Heart right ventricle (tissue), 16 donors: ENCODE measurements at regions of chr5 and their contacts with region 1.

Region 1: GRCh38 chr5:74640450-74640953 is at the start of gene ENC1:
- DNase-seq: peak; percentile 87 to 89
- ATAC-seq: peak; percentile 85 to 95 (median 89)
- H3K4me3 ChIP-seq: peak within 1 kb of the TSS; percentile 36 to 89 (median 81)
- H3K27ac ChIP-seq: peak within 1 kb of the TSS; percentile 61 to 97 (median 92)
- H3K4me1 ChIP-seq: peaks cover 5 to 67% (median 43%) of the 10 kb centered on the region in 9 donors
- H3K27me3 ChIP-seq: no peaks in the 10 kb centered on the region
- CTCF ChIP-seq: peak; percentile 44 to 70 (median 60)
- total RNA-seq, gene ENC1: 2.8 to 9.1 (median 4.0) TPM

Region 2: DNA sequence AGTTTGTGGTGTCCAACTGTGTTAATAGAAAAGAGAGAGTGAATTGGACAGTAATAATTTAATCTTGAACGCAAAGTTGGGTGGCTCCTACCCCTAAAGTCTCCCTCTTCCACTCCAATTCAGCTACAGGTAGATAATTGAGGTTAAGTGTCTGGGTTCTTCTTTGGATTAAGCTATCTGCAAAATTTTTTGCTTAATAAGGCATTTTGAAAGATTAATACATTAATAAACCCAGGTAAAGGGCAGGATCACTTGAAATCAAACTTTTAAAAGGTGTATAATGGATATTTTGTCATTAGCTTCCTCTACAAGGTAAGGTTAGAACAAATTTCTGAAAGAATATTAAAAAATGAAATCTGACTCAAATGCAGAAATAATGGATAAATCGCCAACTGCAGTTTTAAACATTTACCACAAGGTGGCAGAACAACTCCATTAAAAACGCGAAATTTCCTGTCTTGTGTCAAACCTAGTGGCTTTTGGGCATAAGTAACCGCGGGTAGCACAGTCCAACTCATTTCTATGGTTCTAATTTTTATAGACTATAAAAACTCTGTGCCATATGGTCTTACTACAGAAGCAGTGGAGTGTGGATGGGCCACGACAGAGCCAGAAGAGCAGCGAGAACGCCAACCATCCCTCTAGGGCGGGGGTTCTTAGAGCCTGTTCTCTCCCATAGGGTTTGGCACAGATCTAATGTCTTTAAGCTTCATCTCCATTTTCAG is 738.0 kb before region 1 on chr5:
- intact Hi-C with region 1: loop called in 5 of 10 experiments (anchors 1 to 5 kb)
- DNase-seq: peak in 1 of 2 donors; percentile 14
- ATAC-seq: peak in 5 of 8 donors; percentile 26 to 44 (median 34)
- H3K4me3 ChIP-seq: peak overlapping the region in 3 of 10 donors; percentile 4 to 25 (median 8)
- H3K27ac ChIP-seq: peak overlapping the region in 2 of 10 donors; percentile 56 to 59
- H3K4me1 ChIP-seq: peaks cover 0 to 54% (median 15%) of the 10 kb centered on the region in 9 donors
- H3K27me3 ChIP-seq: no peaks in the 10 kb centered on the region
- CTCF ChIP-seq: peak; percentile 69 to 93 (median 85)

Region 3: DNA sequence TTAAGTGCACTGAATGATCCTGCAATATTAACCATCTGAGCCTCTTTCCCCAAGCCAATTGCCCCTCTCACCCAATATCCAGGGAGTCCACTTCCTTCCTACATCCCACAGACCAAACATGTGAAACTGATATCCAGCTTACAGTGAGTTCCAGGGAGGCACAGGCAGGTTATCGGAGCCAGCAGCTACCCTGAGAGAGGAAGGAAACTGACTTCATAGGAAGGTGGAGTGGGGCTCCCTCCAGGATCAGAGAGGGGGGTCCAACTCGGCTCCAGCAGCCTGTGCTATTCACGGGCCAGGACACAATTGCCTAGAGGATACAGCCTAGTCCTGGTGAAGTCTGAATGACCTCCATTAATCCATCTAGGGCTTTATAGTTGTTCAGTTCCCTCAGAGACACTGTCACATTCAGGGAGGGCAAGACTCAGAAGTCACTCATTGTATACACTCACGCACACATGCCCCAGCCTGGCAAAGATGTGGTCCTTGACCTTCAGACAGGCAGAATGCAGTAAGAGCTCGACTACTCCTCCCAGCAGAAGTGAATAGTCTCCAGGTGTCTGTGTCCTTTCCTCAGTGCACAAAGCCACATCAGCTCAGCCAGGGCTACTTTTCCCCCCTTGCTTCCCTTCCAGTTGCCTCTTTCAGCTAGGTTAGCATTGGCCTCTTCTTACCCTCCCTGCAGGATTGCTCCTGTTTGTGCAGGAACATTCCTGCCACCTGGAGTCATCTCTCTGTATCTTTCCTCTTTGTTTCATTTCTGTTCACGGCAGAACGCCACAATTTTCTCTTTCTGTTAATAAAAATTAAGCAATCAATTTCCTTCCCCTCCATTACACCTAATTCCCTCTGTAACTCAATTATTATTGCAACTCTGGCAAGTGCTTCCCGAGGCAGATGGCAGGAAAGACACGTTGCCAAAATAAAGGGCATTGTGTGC is 512.9 kb before region 1 on chr5:
- intact Hi-C with region 1: loop called in 1 of 10 experiments (anchors 10 kb)
- DNase-seq: peak in 1 of 2 donors; percentile 33
- ATAC-seq: peak; percentile 68 to 90 (median 84)
- H3K4me3 ChIP-seq: no peak overlapping the region
- H3K27ac ChIP-seq: peak overlapping the region in 3 of 10 donors; percentile 13 to 45 (median 29)
- H3K4me1 ChIP-seq: peaks cover 0 to 27% (median 10%) of the 10 kb centered on the region in 9 donors
- H3K27me3 ChIP-seq: no peaks in the 10 kb centered on the region
- CTCF ChIP-seq: no peak

Region 4: GRCh38 chr5:74294231-74294705 is 346.2 kb before region 1 on chr5:
- intact Hi-C with region 1: loop called in 3 of 10 experiments (anchors 5 to 10 kb)
- DNase-seq: peak in 1 of 2 donors; percentile 21
- ATAC-seq: peak in 1 of 8 donors; percentile 8
- H3K4me3 ChIP-seq: no peak overlapping the region
- H3K27ac ChIP-seq: no peak overlapping the region
- H3K4me1 ChIP-seq: peaks cover 0 to 18% (median 7%) of the 10 kb centered on the region in 9 donors
- H3K27me3 ChIP-seq: no peaks in the 10 kb centered on the region
- CTCF ChIP-seq: no peak

Region 5: GRCh38 chr5:74446725-74447241 is 193.7 kb before region 1 on chr5:
- intact Hi-C with region 1: loop called in 1 of 10 experiments (anchors 10 kb)
- DNase-seq: peak; percentile 14 to 46
- ATAC-seq: peak; percentile 77 to 90 (median 83)
- H3K4me3 ChIP-seq: peak overlapping the region in 2 of 10 donors; percentile 7 to 8
- H3K27ac ChIP-seq: peak overlapping the region in 7 of 10 donors; percentile 15 to 67 (median 46)
- H3K4me1 ChIP-seq: peaks cover 0 to 22% (median 7%) of the 10 kb centered on the region in 9 donors
- H3K27me3 ChIP-seq: no peaks in the 10 kb centered on the region
- CTCF ChIP-seq: no peak

Region 6: DNA sequence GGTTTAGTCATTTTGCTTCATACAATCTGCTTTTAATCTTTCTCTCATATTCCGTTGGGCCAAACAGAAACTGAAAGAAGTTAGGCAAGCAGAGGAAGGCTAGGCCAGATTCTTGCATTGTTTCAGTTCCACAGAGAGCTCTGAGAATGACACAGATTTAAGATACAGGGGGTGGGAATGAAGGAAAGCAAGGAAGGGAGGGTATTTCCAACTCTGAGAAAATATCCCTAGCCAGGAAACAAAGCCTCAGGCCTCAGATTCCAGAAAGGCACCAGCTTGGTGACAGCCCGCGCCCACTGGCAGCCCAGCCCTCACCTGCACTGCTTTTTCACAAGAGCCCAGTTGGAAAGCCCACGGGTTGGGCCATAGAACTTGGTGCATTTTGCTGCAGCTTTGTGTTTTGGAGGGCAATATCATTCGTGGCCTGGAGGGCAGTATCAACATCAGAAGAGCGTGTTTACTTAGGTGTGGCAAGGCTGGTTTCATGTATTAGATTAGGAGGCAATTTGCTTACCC is 63.5 kb before region 1 on chr5:
- intact Hi-C with region 1: loop called in 2 of 10 experiments (anchors 10 kb)
- DNase-seq: peak in 1 of 2 donors; percentile 28
- ATAC-seq: peak in 7 of 8 donors; percentile 76 to 95 (median 89)
- H3K4me3 ChIP-seq: peak overlapping the region in 5 of 10 donors; percentile 8 to 21 (median 12)
- H3K27ac ChIP-seq: peak overlapping the region in 9 of 10 donors; percentile 54 to 87 (median 74)
- H3K4me1 ChIP-seq: peaks cover 0 to 26% (median 16%) of the 10 kb centered on the region in 9 donors
- H3K27me3 ChIP-seq: no peaks in the 10 kb centered on the region
- CTCF ChIP-seq: no peak